PC-3 (cell line): ENCODE measurements at regions of chr7 and their contacts with region 1.

Region 1: DNA sequence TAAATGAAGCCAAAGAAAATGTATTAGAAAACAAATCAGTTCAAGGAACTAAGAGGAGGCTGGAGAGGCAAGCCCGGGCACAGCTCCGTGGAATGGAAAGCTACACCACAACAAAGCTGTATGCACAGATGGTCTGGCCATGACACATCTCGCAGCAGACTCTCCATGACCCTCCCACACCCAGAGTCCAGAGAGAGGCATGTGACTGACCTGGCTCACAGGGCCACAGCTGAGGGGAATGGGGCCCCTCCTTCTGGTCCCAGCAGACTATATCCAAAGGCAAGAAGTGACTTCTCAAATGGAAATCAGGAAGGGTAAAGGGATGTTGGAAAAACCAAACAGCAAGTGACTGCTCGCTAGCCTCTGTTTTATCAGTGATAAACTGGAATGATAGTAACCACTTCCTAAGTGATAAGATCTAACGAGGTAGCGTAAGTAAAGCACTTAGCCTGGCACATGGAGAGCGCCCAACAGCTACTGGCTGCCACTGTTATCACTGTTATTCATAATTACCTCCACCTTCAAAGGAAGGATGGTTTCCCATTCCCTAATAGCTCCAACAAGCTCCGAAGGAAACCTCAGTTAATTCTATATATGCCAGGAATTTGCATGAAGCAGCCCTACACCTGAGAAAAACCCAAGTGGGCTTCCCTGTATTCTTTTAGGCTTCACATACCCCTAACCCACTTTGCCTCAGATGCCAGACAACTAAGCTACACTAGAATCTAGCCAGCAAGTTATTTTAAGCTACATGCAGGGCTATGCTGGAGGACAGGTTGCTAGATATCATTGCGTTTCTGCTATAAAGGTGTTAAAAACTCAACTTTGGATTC is 8.4 kb downstream of the OSBPL3 start:
- DNase-seq: peak; percentile 26
- ATAC-seq: peak; percentile 33; the same call in 1 of the 2 replicates
- H3K4me3 ChIP-seq: no peak overlapping the region
- H3K27ac ChIP-seq: no peak overlapping the region
- H3K4me1 ChIP-seq: peaks cover 45% of the 10 kb centered on the region
- H3K27me3 ChIP-seq: no peaks in the 10 kb centered on the region
- CTCF ChIP-seq: no peak

Region 2: GRCh38 chr7:24926623-24927524 is 44.7 kb before region 1 on chr7:
- CTCF ChIA-PET with region 1: no interaction called
- POLR2A ChIA-PET with region 1: interaction called, 5 read pairs
- intact Hi-C with region 1: loop called (anchors 5 kb)
- DNase-seq: peak; percentile 8
- ATAC-seq: peak; percentile 63
- H3K4me3 ChIP-seq: no peak overlapping the region
- H3K27ac ChIP-seq: peak overlapping the region; percentile 41; the same call in 1 of the 2 replicates
- H3K4me1 ChIP-seq: peaks cover 31% of the 10 kb centered on the region
- H3K27me3 ChIP-seq: no peaks in the 10 kb centered on the region
- CTCF ChIP-seq: no peak

Region 3: GRCh38 chr7:24948739-24949138 is 22.8 kb before region 1 on chr7:
- CTCF ChIA-PET with region 1: no interaction called
- POLR2A ChIA-PET with region 1: no interaction called
- intact Hi-C with region 1: loop called (anchors 2 kb)
- DNase-seq: no peak
- ATAC-seq: peak; percentile 23; the same call in 1 of the 2 replicates
- H3K4me3 ChIP-seq: no peak overlapping the region
- H3K27ac ChIP-seq: no peak overlapping the region
- H3K4me1 ChIP-seq: peaks cover 17% of the 10 kb centered on the region
- H3K27me3 ChIP-seq: no peaks in the 10 kb centered on the region
- CTCF ChIP-seq: no peak